ENCODE measurements at regions of chr13 and their contacts with region 1.

Region 1: GRCh38 chr13:114325729-114326128 is 11.4 kb downstream of the CHAMP1 start:
- DNase-seq: no peak
- H3K4me3 ChIP-seq: no peak overlapping the region
- H3K27ac ChIP-seq: no peak overlapping the region
- H3K4me1 ChIP-seq: no peaks in the 10 kb centered on the region
- H3K27me3 ChIP-seq: no peaks in the 10 kb centered on the region
- CTCF ChIP-seq: no peak
- EP300 ChIP-seq: no peak
- RAD21 ChIP-seq: no peak

Region 2: DNA sequence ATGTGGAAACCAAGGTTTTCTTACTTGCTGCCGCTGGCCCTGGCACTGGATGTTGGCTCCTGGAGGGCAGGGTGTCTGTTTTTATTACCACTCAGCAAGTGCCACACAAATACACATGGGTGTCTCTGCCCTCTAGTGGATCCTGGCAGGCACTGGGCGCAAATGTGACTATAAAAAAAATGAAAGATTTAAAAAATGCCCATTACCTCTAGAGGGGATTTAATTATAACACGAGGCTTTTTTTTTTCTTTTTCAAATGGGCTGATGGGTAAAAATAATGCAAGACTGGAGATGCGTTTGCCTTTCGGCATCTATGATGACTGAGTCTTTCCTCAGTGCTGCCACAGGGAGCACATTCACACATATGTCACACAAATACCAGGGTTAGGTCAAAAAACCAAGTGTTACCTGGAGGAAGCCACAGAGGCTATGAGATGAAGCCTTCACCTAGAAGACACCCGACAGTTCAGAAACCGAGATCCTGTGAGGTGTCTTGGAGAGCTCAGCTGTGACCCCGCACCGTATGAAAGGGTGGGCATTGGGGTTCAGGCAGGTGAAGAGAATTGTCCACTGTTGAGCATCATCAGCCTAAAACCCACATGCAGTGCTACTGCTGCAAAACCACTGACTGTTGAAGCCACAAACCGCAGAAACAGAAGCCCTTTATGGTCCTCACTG is 14.3 kb after region 1 on chr13:
- CTCF ChIA-PET with region 1: interaction called, 27 read pairs
- POLR2A ChIA-PET with region 1: no interaction called
- DNase-seq: peak; percentile 70
- H3K4me3 ChIP-seq: no peak overlapping the region
- H3K27ac ChIP-seq: no peak overlapping the region
- H3K4me1 ChIP-seq: peaks cover 0 to 7% of the 10 kb centered on the region in 2 experiments; a peak in 2 of 4 replicates
- H3K27me3 ChIP-seq: no peaks in the 10 kb centered on the region
- CTCF ChIP-seq: peak; percentile 83
- EP300 ChIP-seq: no peak
- RAD21 ChIP-seq: peak; percentile 79